BJ (cell line): ENCODE measurements at regions of chr9 and their contacts with region 1.

Region 1: GRCh38 chr9:114405294-114406034 is 17.7 kb upstream of the AKNA start:
- DNase-seq: no peak
- H3K4me3 ChIP-seq: no peak overlapping the region
- H3K27me3 ChIP-seq: no peaks in the 10 kb centered on the region
- CTCF ChIP-seq: peak; percentile 85

Region 2: DNA sequence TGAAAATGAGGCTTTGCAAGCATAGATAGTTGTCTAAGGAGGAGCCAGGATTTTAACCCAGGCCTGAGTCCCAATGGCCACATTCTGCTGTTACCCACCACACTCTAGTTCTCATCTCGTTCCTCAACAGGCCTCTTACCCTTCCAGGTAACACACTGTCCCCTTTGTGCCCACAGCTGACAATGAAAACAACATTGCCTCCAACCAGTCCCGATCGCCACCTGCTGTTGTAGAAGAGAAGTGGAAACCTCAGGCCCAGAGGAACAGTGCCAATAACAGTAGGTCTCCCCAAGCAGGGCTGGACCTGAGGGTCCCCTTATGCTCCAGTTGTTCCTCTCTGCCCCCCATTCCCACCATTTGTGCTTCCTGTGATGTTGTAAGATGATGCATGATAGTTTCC is 357.7 kb before region 1 on chr9:
- CTCF ChIA-PET with region 1: no interaction called
- POLR2A ChIA-PET with region 1: no interaction called
- DNase-seq: no peak
- H3K4me3 ChIP-seq: no peak overlapping the region
- H3K27me3 ChIP-seq: no peaks in the 10 kb centered on the region
- CTCF ChIP-seq: peak; percentile 37

Region 3: DNA sequence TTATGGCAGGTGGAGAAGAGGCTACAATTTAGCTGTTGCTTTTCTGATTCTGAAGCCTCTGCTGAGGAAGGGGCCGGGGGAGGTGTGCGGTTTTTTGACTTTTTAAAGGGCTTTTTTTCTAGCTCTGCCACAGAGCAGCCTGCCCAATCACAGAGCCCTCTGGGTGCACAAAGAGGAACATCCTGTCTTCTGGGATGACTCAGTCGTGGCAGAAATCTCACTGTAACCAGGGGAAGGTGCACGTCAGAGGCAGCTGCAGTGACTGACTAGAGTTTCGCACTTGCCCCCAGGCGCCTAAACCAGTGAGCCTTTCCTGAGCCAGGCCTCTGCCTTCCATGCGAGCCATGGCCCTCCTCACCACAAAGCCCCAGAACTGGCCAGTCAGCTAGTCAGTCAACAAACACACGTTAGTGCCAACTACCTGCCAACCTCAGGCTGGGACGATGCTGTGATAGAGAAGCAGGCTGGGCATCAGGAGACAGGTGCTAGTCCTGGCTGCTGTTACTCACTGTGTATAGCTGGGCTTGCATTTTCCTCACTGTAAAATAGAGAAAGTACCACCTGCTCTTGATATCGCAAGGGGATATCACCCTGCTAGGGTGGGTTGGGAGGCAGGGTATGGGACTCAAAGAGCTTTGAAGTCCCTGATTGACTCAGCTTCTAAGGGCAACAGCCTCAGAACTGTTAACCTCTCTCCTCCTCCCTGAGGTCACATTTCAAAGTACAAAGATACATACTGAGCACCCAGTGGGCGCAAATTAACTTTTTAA is 19.9 kb before region 1 on chr9:
- CTCF ChIA-PET with region 1: interaction called, 11 read pairs
- POLR2A ChIA-PET with region 1: no interaction called
- DNase-seq: peak; percentile 69
- H3K4me3 ChIP-seq: no peak overlapping the region
- H3K27me3 ChIP-seq: no peaks in the 10 kb centered on the region
- CTCF ChIP-seq: no peak

Region 4: DNA sequence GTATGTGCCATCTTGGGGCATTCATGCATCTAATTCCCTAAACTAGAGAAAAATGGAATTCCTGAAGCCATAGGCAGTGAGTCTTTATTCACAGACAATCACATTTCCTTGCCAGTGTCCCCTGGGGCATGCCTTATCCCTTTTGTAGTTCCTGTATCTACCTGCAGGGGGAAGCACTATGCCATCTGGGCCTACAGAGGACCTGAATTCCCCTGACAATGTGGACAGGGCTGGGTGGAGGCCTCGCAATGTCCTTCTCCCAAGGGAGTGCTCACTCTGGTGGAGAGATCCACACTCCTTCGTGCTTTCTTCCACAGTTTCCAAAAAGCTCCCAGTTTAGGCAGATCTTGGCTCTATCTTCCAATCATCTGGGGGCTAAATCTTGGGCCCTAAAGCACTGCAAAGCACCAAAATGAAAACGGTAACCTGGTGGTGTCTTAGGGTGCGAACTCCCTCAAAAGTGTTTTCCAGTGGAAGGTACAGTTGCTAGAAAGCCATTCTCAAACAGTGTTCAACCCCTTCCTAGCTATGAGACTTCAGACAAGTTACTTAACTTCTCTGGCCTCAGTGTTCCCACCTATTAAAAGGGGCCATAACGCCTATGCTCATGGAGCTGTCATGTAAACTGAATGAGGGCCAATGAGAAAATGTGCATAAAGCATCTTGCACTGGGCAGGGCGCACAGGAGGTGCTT is 82.3 kb after region 1 on chr9:
- CTCF ChIA-PET with region 1: interaction called, 28 read pairs
- POLR2A ChIA-PET with region 1: no interaction called
- DNase-seq: no peak
- H3K4me3 ChIP-seq: no peak overlapping the region
- H3K27me3 ChIP-seq: no peaks in the 10 kb centered on the region
- CTCF ChIP-seq: peak; percentile 90

Region 5: GRCh38 chr9:114662081-114662989 is 256.9 kb after region 1 on chr9:
- CTCF ChIA-PET with region 1: interaction called, 14 read pairs
- POLR2A ChIA-PET with region 1: no interaction called
- DNase-seq: no peak
- H3K4me3 ChIP-seq: no peak overlapping the region
- H3K27me3 ChIP-seq: peaks cover 8% of the 10 kb centered on the region
- CTCF ChIP-seq: peak; percentile 89

Region 6: DNA sequence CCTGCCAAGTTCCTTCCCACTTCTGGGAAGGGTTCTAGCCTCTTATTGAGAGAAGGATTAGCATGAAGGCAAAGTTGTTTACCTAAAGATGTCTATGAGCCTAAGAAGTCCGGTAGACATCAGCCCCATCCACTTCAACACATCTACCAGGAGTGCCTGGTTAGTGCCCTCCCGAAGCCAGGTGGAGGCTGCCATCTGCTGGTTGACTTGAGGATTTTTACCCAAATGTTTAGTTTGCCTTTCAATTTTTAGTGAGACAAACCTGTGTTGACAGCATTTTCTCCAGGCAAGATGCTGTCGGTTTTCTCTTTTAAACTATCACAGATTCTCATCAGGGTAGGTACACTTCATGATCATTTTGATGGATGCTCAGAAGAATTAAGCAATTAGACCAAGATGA is 608.5 kb after region 1 on chr9:
- CTCF ChIA-PET with region 1: interaction called, 24 read pairs
- POLR2A ChIA-PET with region 1: no interaction called
- DNase-seq: no peak
- H3K4me3 ChIP-seq: no peak overlapping the region
- H3K27me3 ChIP-seq: peaks cover 2% of the 10 kb centered on the region; the same call in 1 of the 2 replicates
- CTCF ChIP-seq: peak; percentile 75